Heart left ventricle (tissue), 16 donors: ENCODE measurements at regions of chr14 and their contacts with region 1.

Region 1: GRCh38 chr14:81275305-81276072 is 54.7 kb upstream of the GTF2A1 start:
- DNase-seq: peak in 1 of 5 donors; percentile 40
- ATAC-seq: peak; percentile 40 to 82 (median 77)
- H3K4me3 ChIP-seq: peak overlapping the region in 5 of 12 donors; percentile 1 to 28 (median 10)
- H3K27ac ChIP-seq: peak overlapping the region in 10 of 12 donors; percentile 32 to 65 (median 55)
- H3K4me1 ChIP-seq: peaks cover 0 to 41% (median 4%) of the 10 kb centered on the region in 12 donors
- H3K27me3 ChIP-seq: no peaks in the 10 kb centered on the region
- CTCF ChIP-seq: no peak
- POLR2A ChIP-seq: no peak

Region 2: GRCh38 chr14:80973931-80974641 is 301.4 kb before region 1 on chr14:
- intact Hi-C with region 1: no loop called
- DNase-seq: no peak
- ATAC-seq: no peak
- H3K4me3 ChIP-seq: no peak overlapping the region
- H3K27ac ChIP-seq: peak overlapping the region in 1 of 12 donors; percentile 19
- H3K4me1 ChIP-seq: no peaks in the 10 kb centered on the region
- H3K27me3 ChIP-seq: peaks cover 0 to 8% (median 0%) of the 10 kb centered on the region in 9 donors
- CTCF ChIP-seq: no peak
- POLR2A ChIP-seq: no peak

Region 3: GRCh38 chr14:81246461-81247145 is 28.9 kb before region 1 on chr14:
- intact Hi-C with region 1: no loop called
- DNase-seq: no peak
- ATAC-seq: no peak
- H3K4me3 ChIP-seq: no peak overlapping the region
- H3K27ac ChIP-seq: no peak overlapping the region
- H3K4me1 ChIP-seq: no peaks in the 10 kb centered on the region
- H3K27me3 ChIP-seq: no peaks in the 10 kb centered on the region
- CTCF ChIP-seq: no peak
- POLR2A ChIP-seq: no peak

Region 4: GRCh38 chr14:81337073-81337472 is 61.6 kb after region 1 on chr14:
- intact Hi-C with region 1: loop called in 1 of 10 experiments (anchors 5 kb)
- DNase-seq: no peak
- ATAC-seq: no peak
- H3K4me3 ChIP-seq: no peak overlapping the region
- H3K27ac ChIP-seq: no peak overlapping the region
- H3K4me1 ChIP-seq: peaks cover 0 to 10% (median 2%) of the 10 kb centered on the region in 12 donors
- H3K27me3 ChIP-seq: no peaks in the 10 kb centered on the region
- CTCF ChIP-seq: no peak
- POLR2A ChIP-seq: no peak

Region 5: GRCh38 chr14:81453166-81453766 is 177.8 kb after region 1 on chr14:
- intact Hi-C with region 1: loop called in 2 of 10 experiments (anchors 2 kb)
- DNase-seq: peak in 3 of 5 donors; percentile 33 to 49 (median 37)
- ATAC-seq: peak in 1 of 4 donors; percentile 30
- H3K4me3 ChIP-seq: peak overlapping the region in 1 of 12 donors; percentile 34
- H3K27ac ChIP-seq: peak overlapping the region in 2 of 12 donors; percentile 3 to 25
- H3K4me1 ChIP-seq: peaks cover 0 to 34% (median 6%) of the 10 kb centered on the region in 12 donors
- H3K27me3 ChIP-seq: peaks cover 0 to 18% (median 0%) of the 10 kb centered on the region in 9 donors
- CTCF ChIP-seq: peak; percentile 72 to 87 (median 80)
- POLR2A ChIP-seq: no peak